AG04449 (cell line): ENCODE measurements at regions of chr19 and their contacts with region 1.

Region 1: DNA sequence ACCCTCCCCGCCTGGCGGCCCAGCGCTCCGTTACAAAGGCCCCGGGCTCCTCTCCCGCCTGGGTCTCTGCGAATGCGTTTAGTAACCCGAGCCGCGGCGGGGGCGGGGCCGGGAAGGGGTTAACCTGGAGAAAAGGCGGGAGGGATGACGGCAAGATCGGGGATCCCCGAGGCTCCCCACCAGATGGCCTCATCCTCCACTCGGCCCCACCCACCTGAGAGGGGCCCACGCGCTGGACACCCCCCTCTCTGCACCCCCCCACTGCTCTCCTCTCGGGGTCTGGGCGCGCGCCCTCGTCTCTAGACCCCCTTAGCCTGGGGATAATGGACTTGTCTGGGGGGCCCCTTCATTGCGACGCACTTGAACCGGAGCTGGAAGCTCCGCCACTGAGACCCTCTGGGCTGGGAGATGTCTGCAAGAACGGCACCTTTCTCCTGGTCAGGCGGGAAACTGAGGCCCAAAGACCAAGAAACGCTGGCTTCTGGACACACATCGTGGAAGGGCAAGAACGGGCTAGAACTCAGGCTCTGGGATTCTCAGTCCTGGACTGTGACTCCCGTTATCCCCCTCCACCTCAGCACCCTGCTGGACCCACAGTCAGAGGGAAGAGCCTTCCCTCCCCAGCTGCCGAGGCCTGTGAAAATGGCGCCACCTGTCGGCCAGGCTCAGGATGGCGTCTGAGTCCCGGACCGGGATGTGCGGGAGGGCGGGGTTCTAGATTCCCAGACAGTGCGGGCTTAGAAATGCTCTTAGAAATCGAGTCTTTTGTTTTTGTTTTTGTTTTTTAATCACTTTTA is 2.9 kb upstream of the LTBP4 start:
- DNase-seq: no peak
- H3K4me3 ChIP-seq: peak overlapping the region; percentile 65
- CTCF ChIP-seq: peak; percentile 97

Region 2: GRCh38 chr19:40523322-40524047 is 74.8 kb before region 1 on chr19:
- CTCF ChIA-PET with region 1: interaction called, 13 read pairs
- POLR2A ChIA-PET with region 1: no interaction called
- DNase-seq: no peak
- H3K4me3 ChIP-seq: no peak overlapping the region
- CTCF ChIP-seq: peak; percentile 78

Region 3: DNA sequence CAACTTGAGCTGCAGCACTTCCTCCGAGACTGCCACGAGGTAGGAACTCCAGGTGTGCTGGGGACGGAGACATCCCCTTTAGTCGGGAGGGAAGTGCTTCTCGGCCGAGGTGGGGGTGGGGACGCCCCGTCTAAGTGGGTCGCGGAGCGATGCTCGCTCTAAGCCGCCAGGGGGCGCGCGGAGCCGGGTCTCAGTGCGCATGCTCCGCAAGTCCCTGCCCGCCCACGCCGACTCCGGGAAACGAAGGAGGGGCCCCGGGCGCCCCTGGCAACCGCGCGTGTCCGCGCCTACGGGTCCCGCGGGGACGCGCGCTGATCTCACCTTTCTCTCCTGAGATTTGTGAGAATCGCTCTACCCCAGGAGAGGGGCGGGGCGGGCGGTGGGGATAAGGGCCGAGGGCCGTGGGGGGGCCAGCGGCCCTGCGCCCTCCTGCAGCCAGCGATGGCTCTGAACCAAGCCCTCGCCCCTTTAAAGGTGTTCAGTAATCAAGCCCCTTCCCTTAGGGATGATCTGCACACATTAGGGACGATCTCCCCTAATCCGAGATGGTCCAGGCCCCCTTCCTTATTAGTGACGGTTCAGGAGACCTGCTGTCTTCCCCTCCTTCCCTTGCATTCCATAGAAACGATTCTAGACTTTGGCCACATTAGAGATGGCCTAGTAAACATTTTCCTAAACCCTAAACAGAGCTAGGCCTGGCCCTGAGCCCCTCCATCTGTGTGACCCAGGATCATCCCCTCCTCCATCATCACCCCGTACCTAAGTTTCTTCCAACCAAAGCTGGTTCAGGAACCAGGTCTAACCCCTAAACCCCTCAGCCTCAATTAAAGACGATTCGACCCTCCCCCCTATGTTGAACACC is 69.0 kb before region 1 on chr19:
- CTCF ChIA-PET with region 1: interaction called, 13 read pairs
- POLR2A ChIA-PET with region 1: no interaction called
- DNase-seq: no peak
- H3K4me3 ChIP-seq: peak overlapping the region; percentile 54
- CTCF ChIP-seq: peak; percentile 97

Region 4: GRCh38 chr19:40588109-40588870 is 10.0 kb before region 1 on chr19:
- CTCF ChIA-PET with region 1: interaction called, 23 read pairs
- POLR2A ChIA-PET with region 1: no interaction called
- DNase-seq: no peak
- H3K4me3 ChIP-seq: no peak overlapping the region
- CTCF ChIP-seq: no peak

Region 5: DNA sequence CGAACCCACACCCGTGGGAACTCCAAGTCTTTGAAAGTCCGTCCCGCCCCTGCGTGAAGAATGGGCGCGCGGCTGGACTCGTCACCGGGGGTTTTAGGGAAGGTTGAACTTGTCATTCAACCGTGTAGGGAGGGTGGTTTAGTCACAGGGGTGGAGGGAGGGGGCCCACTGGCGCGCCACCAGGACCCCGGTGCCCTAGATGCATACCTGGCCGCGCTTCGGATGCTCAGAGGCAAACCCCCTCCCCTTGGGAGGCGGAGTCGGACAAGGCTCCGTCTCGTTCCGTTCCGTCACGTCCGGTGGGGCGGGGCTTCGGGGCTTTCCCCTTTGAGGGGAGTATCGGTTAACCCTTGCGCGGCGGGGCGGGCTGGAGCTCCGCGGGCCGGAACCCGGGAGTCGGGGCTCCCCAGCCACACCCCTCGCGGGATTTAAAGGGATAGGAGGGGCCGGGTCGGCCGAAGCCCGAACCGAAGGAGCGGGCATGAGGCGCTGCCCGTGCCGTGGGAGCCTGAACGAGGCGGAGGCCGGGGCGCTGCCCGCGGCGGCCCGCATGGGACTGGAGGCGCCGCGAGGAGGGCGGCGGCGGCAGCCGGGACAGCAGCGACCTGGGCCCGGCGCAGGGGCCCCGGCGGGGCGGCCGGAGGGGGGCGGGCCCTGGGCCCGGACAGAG is 118.5 kb after region 1 on chr19 and contains the starts of genes COQ8B and ITPKC:
- CTCF ChIA-PET with region 1: no interaction called
- POLR2A ChIA-PET with region 1: no interaction called
- DNase-seq: peak; percentile 83
- H3K4me3 ChIP-seq: peak within 1 kb of the TSS; percentile 77
- CTCF ChIP-seq: no peak